Activated CD4-positive, alpha-beta memory T cell treated with anti-CD3 and anti-CD28 coated beads, Interleukin-2, amount 10 ng/mL, durations not matched to agents 7 days and 5 days (primary cell): ENCODE measurements at regions of chr6 and their contacts with region 1.

Region 1: GRCh38 chr6:161418463-161418945 is 144.6 kb upstream of the AGPAT4 start:
- DNase-seq: peak; percentile 27
- H3K4me3 Mint-ChIP-seq: no peak overlapping the region
- H3K27ac Mint-ChIP-seq: no peak overlapping the region
- H3K4me1 Mint-ChIP-seq: no peaks in the 10 kb centered on the region
- H3K27me3 Mint-ChIP-seq: peaks cover 7% of the 10 kb centered on the region

Region 2: DNA sequence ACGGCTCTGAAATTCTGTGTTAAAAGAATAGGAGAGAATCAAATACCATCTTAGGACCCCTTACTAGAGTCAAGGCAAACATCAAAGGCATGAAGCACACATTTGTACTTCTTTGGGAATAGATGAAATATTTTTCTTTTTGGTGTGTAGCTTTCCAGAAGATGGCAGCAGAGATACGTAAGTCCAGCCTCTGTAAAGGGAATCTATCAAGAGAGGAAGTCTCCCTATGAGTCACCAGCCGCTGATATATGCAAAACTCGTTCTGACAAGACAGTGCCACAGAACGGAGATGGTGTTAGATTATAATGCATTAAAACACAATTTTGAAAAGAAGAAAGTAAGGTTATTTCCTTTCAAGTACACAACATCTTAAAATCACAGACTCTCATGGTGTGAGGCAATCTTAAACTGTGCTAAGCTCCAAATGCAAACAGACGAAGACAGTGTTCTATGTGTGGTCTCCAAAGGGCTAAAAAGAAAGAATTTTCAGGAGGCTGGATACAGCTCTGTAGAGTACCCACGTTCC is 24.6 kb before region 1 on chr6:
- CTCF ChIA-PET with region 1: interaction called, 16 read pairs
- POLR2A ChIA-PET with region 1: interaction called, 5 read pairs
- DNase-seq: peak; percentile 69
- H3K4me3 Mint-ChIP-seq: no peak overlapping the region
- H3K27ac Mint-ChIP-seq: no peak overlapping the region
- H3K4me1 Mint-ChIP-seq: no peaks in the 10 kb centered on the region
- H3K27me3 Mint-ChIP-seq: peaks cover 34% of the 10 kb centered on the region

Region 3: DNA sequence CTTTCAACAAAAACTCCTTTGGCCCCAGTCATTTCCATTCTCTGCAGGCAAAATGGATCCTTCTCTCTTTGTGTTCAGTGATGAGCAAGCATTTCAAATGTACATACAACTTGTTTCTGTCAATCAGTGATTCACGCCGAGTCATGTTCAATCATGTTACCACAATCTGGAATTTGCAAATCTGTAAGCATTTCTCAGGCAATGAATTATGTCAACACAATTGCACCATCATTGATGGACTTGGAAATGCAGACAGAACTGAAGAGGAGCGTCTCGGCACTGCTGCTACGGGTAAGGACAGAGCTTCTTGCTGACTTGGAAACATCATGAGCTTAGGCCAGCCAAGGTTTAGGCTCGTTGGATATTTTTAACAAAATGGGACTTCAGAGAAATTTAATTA is 11.9 kb before region 1 on chr6:
- CTCF ChIA-PET with region 1: interaction called, 20 read pairs
- POLR2A ChIA-PET with region 1: no interaction called
- DNase-seq: no peak
- H3K4me3 Mint-ChIP-seq: no peak overlapping the region
- H3K27ac Mint-ChIP-seq: no peak overlapping the region
- H3K4me1 Mint-ChIP-seq: no peaks in the 10 kb centered on the region
- H3K27me3 Mint-ChIP-seq: no peaks in the 10 kb centered on the region

Region 4: GRCh38 chr6:161439093-161439492 is 20.6 kb after region 1 on chr6:
- CTCF ChIA-PET with region 1: interaction called, 18 read pairs
- POLR2A ChIA-PET with region 1: no interaction called
- DNase-seq: peak; percentile 20
- H3K4me3 Mint-ChIP-seq: no peak overlapping the region
- H3K27ac Mint-ChIP-seq: no peak overlapping the region
- H3K4me1 Mint-ChIP-seq: peaks cover 4% of the 10 kb centered on the region
- H3K27me3 Mint-ChIP-seq: no peaks in the 10 kb centered on the region

Region 5: DNA sequence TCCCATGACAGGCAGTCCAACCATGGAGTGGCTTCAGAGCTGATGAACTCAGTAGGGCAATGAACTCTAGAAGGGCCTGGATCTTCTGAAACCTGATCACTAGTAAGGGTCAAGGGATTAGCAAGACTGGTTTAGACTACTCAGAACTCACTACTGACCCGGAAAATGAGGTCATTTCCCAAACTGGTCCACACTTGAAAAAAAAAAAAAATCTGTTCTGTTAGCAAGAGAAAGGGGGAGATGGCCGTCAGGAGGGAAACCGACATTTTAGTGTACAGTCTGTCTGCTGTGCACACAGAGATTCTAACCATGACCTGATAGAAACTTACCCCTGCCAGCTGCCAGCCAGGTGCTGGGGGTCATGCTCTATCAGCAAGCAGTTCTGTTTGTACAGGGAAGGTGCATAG is 117.7 kb after region 1 on chr6:
- CTCF ChIA-PET with region 1: no interaction called
- POLR2A ChIA-PET with region 1: no interaction called
- DNase-seq: no peak
- H3K4me3 Mint-ChIP-seq: no peak overlapping the region
- H3K27ac Mint-ChIP-seq: no peak overlapping the region
- H3K4me1 Mint-ChIP-seq: no peaks in the 10 kb centered on the region
- H3K27me3 Mint-ChIP-seq: no peaks in the 10 kb centered on the region

Region 6: GRCh38 chr6:161694995-161695394 is 276.5 kb after region 1 on chr6:
- CTCF ChIA-PET with region 1: interaction called, 42 read pairs
- POLR2A ChIA-PET with region 1: no interaction called
- DNase-seq: no peak
- H3K4me3 Mint-ChIP-seq: no peak overlapping the region
- H3K27ac Mint-ChIP-seq: no peak overlapping the region
- H3K4me1 Mint-ChIP-seq: no peaks in the 10 kb centered on the region
- H3K27me3 Mint-ChIP-seq: no peaks in the 10 kb centered on the region